Activated naive CD4-positive, alpha-beta T cell treated with anti-CD3 and anti-CD28 coated beads, Interleukin-2, amount 10 ng/mL, durations not matched to agents 7 days and 5 days (primary cell): ENCODE measurements at regions of chr6 and their contacts with region 1.

Region 1: DNA sequence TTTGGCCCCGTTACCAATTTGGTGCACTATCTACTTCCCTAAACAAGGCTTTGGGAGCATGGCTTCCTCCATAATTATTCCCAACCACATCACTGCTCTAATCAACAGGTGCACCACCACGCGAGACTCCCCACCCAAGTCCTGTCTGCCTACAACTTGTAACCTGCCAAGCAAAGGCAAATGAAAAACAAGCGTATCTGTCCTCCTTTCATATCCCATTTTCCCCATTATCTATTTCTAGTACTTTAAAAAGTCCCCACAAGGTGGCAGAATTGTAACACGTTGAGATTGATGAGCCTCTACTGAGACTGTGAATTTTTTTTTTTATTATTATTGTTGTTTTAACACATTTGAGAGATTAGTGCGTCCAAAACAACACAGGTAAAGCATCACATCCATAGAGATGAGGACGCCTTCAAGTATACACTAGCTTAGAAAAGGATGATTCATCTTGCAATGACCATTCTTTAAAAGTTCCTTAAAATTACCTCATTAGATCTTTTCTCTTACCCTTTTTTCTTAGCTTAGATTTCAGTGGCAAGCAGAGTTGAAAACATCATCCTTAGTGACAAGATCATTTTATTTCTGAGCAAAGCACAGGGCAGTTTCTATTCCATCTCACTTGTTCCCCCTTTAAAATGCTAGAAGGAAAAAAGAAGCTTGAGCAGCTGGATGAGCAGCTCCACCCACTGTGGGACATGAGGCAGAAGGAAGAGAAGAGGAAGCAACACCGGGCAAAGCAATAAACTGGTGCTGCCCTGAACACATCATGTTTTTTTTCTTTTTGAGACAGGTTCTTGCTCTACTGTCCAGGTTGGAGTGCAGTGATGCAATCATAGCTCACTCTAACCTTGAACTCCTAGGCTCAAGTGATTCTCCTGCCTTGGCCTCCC is 210.8 kb downstream of the ARHGAP18 start:
- DNase-seq: no peak
- H3K4me3 Mint-ChIP-seq: no peak overlapping the region
- H3K27ac Mint-ChIP-seq: no peak overlapping the region
- H3K4me1 Mint-ChIP-seq: peaks cover 28% of the 10 kb centered on the region
- H3K27me3 Mint-ChIP-seq: no peaks in the 10 kb centered on the region

Region 2: DNA sequence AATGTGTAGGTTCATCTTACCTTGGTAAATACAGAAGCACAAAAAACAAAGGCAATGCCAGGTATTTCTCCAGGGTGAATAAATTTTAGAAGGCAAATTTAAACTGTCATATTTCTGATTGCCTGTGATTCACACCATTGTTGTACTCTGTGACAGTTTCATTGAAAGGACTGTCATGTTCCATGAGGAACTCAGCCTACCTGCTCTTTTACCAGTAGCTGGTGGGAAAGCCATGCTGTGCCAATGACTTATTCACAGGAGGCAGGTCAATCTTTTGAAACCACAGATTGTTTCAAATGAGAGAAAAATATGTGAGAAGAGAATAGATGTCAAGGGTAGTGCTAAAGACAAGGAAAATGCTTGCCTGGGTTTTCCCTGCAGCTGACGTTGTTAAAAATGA is 409.8 kb before region 1 on chr6:
- CTCF ChIA-PET with region 1: no interaction called
- DNase-seq: no peak
- H3K4me3 Mint-ChIP-seq: no peak overlapping the region
- H3K27ac Mint-ChIP-seq: no peak overlapping the region
- H3K4me1 Mint-ChIP-seq: no peaks in the 10 kb centered on the region
- H3K27me3 Mint-ChIP-seq: no peaks in the 10 kb centered on the region

Region 3: GRCh38 chr6:129478379-129478778 is 20.8 kb before region 1 on chr6:
- CTCF ChIA-PET with region 1: no interaction called
- DNase-seq: no peak
- H3K4me3 Mint-ChIP-seq: no peak overlapping the region
- H3K27ac Mint-ChIP-seq: no peak overlapping the region
- H3K4me1 Mint-ChIP-seq: no peaks in the 10 kb centered on the region
- H3K27me3 Mint-ChIP-seq: no peaks in the 10 kb centered on the region

Region 4: GRCh38 chr6:129539032-129539431 is 39.8 kb after region 1 on chr6:
- CTCF ChIA-PET with region 1: no interaction called
- DNase-seq: no peak
- H3K4me3 Mint-ChIP-seq: no peak overlapping the region
- H3K27ac Mint-ChIP-seq: no peak overlapping the region
- H3K4me1 Mint-ChIP-seq: no peaks in the 10 kb centered on the region
- H3K27me3 Mint-ChIP-seq: peaks cover 9% of the 10 kb centered on the region

Region 5: GRCh38 chr6:129567374-129567773 is 68.2 kb after region 1 on chr6:
- CTCF ChIA-PET with region 1: interaction called, 23 read pairs
- DNase-seq: peak; percentile 52
- H3K4me3 Mint-ChIP-seq: no peak overlapping the region
- H3K27ac Mint-ChIP-seq: no peak overlapping the region
- H3K4me1 Mint-ChIP-seq: no peaks in the 10 kb centered on the region
- H3K27me3 Mint-ChIP-seq: peaks cover 4% of the 10 kb centered on the region

Region 6: DNA sequence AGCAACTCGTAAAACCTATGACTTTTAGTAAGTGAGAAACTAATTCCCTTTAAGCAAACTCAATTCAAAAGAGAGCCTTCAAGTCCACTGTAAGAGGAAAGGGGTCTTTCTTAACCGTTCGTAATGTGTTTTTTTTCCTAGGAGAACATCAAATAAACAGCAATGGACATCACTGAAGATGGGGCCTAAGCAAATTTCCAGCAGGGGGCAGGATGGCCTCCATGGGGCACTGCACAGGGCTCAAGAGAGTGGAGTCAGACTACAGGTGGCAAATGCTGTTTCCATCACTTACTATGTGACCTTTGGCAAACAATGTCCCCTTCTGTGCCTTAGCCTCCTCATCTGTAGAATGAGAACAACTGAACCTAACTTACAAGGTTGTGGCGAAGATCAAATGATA is 122.1 kb after region 1 on chr6:
- CTCF ChIA-PET with region 1: no interaction called
- DNase-seq: peak; percentile 49
- H3K4me3 Mint-ChIP-seq: no peak overlapping the region
- H3K27ac Mint-ChIP-seq: no peak overlapping the region
- H3K4me1 Mint-ChIP-seq: peaks cover 2% of the 10 kb centered on the region
- H3K27me3 Mint-ChIP-seq: no peaks in the 10 kb centered on the region

Region 7: DNA sequence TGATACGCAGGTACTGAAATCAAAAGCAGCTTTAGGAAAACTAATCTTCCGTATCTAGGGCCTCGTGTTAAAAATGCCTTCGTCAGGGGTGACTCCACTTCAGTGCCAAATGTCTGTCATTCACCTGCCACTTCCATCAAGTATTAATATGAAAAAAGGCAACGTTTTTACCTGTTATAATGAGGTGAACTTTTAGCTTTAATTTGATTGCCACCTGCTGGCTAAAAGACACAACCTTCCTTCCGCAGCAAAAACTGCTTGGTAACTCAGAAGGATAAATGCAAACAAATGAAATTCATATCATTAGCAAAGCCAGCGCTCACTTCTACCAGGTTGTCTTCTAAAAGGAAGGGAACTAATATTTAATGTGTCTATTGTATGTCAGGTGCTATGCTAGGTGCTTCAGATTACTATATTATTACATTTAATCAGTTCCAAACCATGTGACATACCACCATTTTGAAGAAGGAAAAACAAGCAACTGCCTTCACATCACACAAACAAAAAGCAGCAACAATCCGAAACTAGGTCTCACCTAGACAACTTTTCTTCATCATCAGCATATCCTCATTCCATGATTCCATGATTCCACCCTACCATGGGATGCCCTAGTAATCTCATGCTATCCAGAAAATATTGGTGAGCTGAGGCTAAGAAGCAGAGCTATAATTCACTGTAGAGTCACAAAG is 231.4 kb after region 1 on chr6:
- CTCF ChIA-PET with region 1: interaction called, 28 read pairs
- DNase-seq: peak; percentile 50
- H3K4me3 Mint-ChIP-seq: no peak overlapping the region
- H3K27ac Mint-ChIP-seq: no peak overlapping the region
- H3K4me1 Mint-ChIP-seq: peaks cover 8% of the 10 kb centered on the region
- H3K27me3 Mint-ChIP-seq: no peaks in the 10 kb centered on the region

Region 8: GRCh38 chr6:129774697-129775447 is 275.7 kb after region 1 on chr6:
- CTCF ChIA-PET with region 1: interaction called, 15 read pairs
- DNase-seq: peak; percentile 64
- H3K4me3 Mint-ChIP-seq: no peak overlapping the region
- H3K27ac Mint-ChIP-seq: no peak overlapping the region
- H3K4me1 Mint-ChIP-seq: peaks cover 9% of the 10 kb centered on the region
- H3K27me3 Mint-ChIP-seq: peaks cover 32% of the 10 kb centered on the region